AG04449 (cell line): ENCODE measurements at regions of chr19 and their contacts with region 1.

Region 1: DNA sequence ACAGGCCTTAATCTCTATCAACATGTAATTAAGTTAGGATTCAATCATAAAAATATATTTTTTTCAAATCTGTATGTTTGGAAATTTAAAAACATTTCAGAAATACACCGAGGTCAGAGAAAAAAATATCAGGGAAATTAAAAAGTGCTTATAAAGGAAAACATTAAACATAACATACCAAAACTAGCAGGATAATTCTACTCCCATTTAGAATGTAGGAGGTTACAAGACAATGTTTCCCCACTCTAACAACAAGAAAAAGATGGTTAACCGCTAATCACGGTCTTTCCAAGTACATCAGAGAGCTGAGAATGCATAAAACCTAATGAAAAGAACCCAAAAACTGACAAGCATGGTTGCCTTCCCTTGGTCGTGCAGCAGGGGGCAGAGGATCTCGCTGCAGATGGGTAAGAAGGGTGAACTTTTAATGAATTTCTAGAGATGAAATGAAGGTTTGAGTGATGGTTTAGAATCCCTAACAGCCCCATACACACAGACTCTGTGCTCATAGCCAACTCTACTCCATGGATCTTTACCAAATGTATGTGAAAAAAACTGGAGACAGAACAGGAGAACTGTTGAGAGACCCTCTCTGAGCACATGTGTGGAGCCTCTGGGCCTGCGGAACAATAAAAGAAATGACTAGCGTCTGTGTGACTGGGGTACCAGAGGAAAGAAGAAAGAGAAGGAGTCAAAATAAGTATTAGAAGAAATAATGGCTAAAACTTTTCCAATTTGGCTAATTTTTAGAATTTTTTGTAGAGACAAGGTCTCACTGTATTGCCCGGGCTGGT is 51.3 kb upstream of the LSM14A start:
- DNase-seq: no peak
- H3K4me3 ChIP-seq: no peak overlapping the region
- CTCF ChIP-seq: peak; percentile 80

Region 2: GRCh38 chr19:33819880-33820781 is 300.9 kb before region 1 on chr19:
- CTCF ChIA-PET with region 1: no interaction called
- POLR2A ChIA-PET with region 1: no interaction called
- DNase-seq: no peak
- H3K4me3 ChIP-seq: peak overlapping the region; percentile 44
- CTCF ChIP-seq: no peak

Region 3: GRCh38 chr19:34104096-34104495 is 16.9 kb before region 1 on chr19:
- CTCF ChIA-PET with region 1: interaction called, 19 read pairs
- POLR2A ChIA-PET with region 1: no interaction called
- DNase-seq: no peak
- H3K4me3 ChIP-seq: no peak overlapping the region
- CTCF ChIP-seq: no peak

Region 4: DNA sequence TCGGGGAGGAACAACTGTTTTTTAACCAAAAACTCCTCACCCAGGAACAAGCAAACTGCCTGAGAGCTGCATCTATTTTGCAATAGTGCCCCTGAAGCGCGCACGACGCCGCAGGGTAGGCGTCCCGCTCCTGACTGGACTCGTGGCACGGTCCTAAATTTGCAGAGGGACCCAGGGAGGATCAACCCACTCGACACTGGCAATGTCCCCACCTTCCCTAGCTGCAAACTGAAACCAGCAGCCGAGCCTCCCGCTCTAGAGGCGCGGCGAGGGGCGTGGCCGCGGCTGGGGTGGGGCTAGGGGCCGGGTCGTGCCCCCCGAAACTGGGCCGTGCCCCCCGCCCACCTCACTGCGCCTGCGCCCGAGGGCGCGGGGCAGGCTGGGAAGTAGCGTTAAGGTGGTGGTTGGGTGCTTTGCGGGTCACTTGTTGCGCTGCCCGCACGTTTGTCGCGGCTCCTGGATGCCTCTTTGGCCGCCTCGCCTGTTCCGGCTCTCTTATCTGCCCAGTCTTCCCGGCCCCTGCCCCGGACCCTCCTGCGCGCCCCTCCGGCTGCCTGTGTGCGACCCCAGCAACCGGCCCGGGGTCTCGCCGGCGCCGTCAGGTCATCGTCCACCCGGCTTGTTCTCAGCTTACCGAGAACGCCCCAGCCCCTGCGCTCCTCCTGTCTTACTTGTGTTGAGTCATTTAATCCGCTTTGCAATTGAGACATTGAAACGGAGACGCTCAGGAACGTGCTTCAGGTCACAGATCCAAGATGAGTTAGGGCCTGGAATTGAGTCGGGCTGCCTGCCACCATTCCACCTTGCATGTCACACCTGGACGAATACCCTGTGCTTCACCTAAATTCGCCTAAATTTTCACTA is 13.4 kb after region 1 on chr19:
- CTCF ChIA-PET with region 1: interaction called, 13 read pairs
- POLR2A ChIA-PET with region 1: no interaction called
- DNase-seq: no peak
- H3K4me3 ChIP-seq: peak overlapping the region; percentile 73
- CTCF ChIP-seq: no peak

Region 5: GRCh38 chr19:34291235-34291634 is 170.2 kb after region 1 on chr19:
- CTCF ChIA-PET with region 1: no interaction called
- POLR2A ChIA-PET with region 1: no interaction called
- DNase-seq: no peak
- H3K4me3 ChIP-seq: no peak overlapping the region
- CTCF ChIP-seq: no peak

Region 6: DNA sequence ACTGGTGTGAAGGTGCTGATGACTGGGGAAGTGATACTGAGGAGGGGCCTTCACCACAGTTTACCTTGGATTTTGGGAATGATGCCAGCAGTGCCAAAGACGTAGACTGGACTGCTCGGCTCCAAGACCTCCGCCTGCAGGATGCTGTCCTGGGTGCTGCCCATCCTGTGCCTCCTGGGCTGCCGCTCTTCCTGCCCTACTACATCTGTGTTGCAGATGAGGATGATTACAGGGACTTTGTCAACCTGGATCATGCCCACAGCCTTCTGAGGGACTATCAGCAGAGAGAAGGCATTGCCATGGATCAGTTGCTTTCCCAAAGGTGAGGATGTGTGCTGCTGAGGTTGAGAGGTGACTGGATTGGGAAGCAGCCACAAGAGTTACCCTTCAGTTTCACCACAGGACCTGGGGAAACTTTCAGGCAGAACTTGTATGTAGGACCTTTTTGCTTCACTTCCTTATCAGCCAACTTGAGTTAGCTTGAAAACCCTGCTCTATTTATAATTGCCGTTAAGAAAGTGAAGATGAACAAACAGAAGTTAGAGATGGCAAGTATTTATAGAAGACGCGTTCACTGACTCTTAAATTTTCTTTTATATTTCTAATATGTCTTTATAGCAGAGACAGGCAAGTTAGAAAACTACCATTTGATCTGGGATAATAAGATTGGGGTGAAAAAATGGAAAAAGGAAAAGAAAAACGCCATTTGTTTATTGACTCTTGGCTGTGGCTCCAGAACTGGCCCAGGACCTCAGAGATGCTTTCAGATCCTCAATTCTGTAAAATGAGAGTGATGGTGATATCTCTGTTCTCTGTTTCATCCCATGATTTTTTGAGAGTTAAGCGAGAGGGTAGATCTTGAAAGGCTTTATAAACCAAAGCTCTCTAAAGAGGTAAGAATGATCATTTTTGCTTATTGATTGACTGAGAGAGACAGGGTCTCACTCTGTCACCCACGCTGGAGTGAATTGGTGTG is 288.4 kb after region 1 on chr19:
- CTCF ChIA-PET with region 1: no interaction called
- POLR2A ChIA-PET with region 1: no interaction called
- DNase-seq: no peak
- H3K4me3 ChIP-seq: no peak overlapping the region
- CTCF ChIP-seq: no peak